Sigmoid colon (tissue), 7 donors: ENCODE measurements at regions of chr1 and their contacts with region 1.

Region 1: DNA sequence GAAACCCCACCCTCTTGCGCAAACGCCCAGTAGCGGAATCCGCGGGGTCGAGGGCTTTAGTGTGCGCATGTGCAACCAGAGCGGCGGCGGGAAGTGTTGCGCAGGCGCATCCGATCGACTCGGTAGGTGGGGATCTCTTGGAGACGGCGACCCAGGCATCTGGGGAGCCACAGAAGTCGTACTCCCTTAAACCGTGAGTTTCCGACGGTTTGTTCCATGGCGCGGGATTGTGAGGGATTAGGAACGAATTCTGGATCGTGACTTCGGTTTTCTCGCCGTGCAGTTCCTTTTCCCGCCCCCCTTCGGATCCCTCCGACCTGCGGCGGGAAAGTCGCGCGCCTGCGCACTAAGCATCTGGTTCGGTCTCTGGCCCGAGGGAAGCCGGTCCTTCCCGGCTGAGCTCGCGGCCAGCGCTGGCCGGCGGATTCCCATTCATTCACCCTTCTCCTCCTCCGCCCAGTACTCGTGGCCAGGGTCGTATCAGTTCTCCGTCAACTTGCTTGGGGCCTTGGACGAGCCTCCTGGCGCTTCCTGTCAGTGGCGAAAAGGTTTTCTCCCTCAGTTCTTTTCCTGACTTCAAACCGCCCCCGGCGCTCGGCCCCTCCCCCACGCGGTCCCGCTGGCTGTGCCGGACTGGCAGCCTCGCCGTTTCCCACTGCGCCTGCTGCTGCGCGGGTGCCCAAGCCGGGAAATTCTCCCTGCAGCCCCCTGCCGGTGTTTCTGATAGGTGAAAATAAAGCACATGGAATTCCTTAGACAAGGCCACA is at the start of gene CDC7:
- DNase-seq: peak; percentile 97
- H3K4me3 ChIP-seq: peak within 1 kb of the TSS; percentile 57 to 77 (median 72)
- H3K27ac ChIP-seq: peak within 1 kb of the TSS; percentile 88 to 93 (median 92)
- H3K4me1 ChIP-seq: peaks cover 0 to 19% (median 16%) of the 10 kb centered on the region in 4 donors
- H3K27me3 ChIP-seq: no peaks in the 10 kb centered on the region
- CTCF ChIP-seq: no peak
- EP300 ChIP-seq: peak in 1 of 4 donors; percentile 45
- POLR2A ChIP-seq: no peak
- total RNA-seq, gene CDC7: 0.36 to 5.0 (median 2.1) TPM

Region 2: GRCh38 chr1:91282695-91283420 is 218.1 kb before region 1 on chr1:
- intact Hi-C with region 1: loop called (anchors 2 kb)
- DNase-seq: peak; percentile 73
- H3K4me3 ChIP-seq: peak overlapping the region in 2 of 4 donors; percentile 20
- H3K27ac ChIP-seq: no peak overlapping the region
- H3K4me1 ChIP-seq: peaks cover 0 to 5% (median 0%) of the 10 kb centered on the region in 4 donors
- H3K27me3 ChIP-seq: no peaks in the 10 kb centered on the region
- CTCF ChIP-seq: peak; percentile 41 to 79 (median 70)
- EP300 ChIP-seq: no peak
- POLR2A ChIP-seq: no peak

Region 3: DNA sequence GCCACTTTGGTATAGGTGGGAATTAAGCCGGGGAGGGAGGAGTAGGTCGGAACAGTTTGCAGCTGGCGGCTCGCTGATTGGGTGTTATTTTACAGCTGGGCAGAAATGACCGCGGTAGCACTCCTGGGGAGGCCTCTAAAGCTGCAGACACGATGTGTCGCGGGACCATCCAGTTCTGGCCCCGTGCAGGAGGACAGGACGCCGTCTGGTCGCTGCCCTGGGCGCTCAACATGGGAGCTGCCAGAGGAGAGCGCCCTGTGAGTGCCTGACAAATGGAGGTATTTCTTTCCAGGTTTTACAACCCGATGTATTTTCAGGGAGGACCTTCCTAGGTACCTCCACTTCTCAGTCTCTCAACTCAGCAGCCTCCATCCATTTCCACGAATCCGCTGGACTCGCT is 45.9 kb after region 1 on chr1:
- intact Hi-C with region 1: no loop called
- DNase-seq: no peak
- H3K4me3 ChIP-seq: no peak overlapping the region
- H3K27ac ChIP-seq: no peak overlapping the region
- H3K4me1 ChIP-seq: peaks cover 0 to 8% (median 7%) of the 10 kb centered on the region in 4 donors
- H3K27me3 ChIP-seq: no peaks in the 10 kb centered on the region
- CTCF ChIP-seq: no peak
- EP300 ChIP-seq: no peak
- POLR2A ChIP-seq: no peak

Region 4: DNA sequence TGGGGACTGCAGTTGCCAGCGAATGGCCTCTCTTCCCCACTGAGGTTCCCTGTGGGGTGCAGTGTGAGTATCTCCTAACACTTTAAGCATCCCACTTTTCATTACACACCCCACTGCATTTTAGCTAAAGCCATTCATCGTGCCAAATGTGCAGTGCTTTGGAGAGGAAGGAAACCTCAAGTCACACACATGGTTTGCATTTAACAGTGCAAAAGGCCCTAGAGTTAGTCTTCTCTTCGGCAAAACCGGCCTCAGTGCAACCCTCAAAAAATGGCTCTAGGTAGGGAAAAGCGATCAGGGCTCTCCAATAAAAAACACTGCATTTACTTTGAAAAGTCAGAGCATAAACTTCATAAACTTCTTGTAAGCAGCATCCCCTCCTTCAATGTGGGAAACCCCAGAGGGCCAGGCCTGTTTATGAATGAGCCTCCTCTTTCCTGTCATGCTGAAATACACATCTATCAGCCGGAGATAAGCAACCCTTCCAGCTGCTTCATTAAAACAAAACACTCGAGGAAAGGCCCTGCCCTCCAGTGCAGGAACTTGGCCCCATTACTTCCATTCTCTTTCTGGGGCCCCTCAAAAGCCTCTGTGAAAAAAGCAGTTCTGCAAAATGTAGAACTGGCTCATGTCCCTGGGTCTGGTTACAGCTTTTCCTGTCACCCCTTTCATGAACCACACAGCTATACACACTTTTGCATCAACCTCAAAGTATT is 183.7 kb after region 1 on chr1:
- intact Hi-C with region 1: no loop called
- DNase-seq: no peak
- H3K4me3 ChIP-seq: no peak overlapping the region
- H3K27ac ChIP-seq: peak overlapping the region; percentile 24 to 56 (median 54)
- H3K4me1 ChIP-seq: peaks cover 0 to 28% (median 23%) of the 10 kb centered on the region in 4 donors
- H3K27me3 ChIP-seq: no peaks in the 10 kb centered on the region
- CTCF ChIP-seq: no peak
- EP300 ChIP-seq: no peak
- POLR2A ChIP-seq: no peak

Region 5: GRCh38 chr1:92298573-92299476 is 797.9 kb after region 1 on chr1 and contains the starts of genes GLMN and RPAP2:
- intact Hi-C with region 1: loop called (anchors 5 kb)
- DNase-seq: peak; percentile 85
- H3K4me3 ChIP-seq: peak within 1 kb of the TSS; percentile 69 to 83 (median 80)
- H3K27ac ChIP-seq: peak within 1 kb of the TSS; percentile 87 to 96 (median 94)
- H3K4me1 ChIP-seq: peaks cover 0 to 28% (median 16%) of the 10 kb centered on the region in 4 donors
- H3K27me3 ChIP-seq: no peaks in the 10 kb centered on the region
- CTCF ChIP-seq: peak in 1 of 4 experiments; percentile 6
- EP300 ChIP-seq: no peak
- POLR2A ChIP-seq: peak; percentile 47 to 55
- total RNA-seq, gene GLMN: 7.2 to 17.6 (median 9.8) TPM
- total RNA-seq, gene RPAP2: 11.1 to 21.2 (median 15.3) TPM